ENCODE measurements at regions of chr2 and their contacts with region 1.

Region 1: GRCh38 chr2:102473020-102473419 is at the start of gene SLC9A4:
- DNase-seq: no peak
- total RNA-seq, gene SLC9A4: not detected

Region 2: DNA sequence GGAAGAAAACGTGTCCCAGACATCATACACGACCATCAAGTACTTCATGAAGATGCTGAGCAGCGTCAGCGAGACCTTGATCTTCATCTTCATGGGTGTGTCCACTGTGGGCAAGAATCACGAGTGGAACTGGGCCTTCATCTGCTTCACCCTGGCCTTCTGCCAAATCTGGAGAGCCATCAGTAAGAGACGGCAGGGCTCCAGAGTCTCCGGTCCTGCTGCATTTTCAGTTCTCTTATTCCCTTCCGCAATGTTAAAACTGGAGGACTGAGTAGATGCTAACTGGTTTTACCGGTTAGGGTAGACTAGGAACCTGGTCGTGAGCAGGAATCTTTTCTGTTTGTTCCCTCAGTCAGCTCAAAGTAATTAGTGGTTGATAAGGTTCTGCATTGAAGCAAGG is 32.3 kb after region 1 on chr2:
- intact Hi-C with region 1: no loop called
- DNase-seq: no peak

Region 3: DNA sequence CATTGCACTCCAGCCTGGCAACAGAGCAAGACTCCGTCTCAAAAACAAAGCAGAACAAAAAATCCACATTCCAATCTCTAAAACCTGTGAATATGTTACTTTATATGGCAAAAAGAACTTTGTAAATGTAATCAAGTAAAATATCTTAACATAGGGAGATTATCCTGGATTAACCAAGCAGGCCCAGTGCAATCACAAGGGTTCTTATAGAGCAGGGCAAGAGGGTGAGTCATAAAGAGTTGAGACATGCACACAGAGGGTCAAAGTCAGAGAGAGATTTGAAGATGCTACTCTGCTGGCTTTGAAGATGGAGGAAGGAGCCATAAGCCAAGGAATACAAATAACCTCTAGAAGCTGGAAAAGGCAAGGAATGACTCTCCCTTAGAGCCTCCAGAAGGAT is 85.4 kb after region 1 on chr2:
- intact Hi-C with region 1: no loop called
- DNase-seq: no peak

Region 4: DNA sequence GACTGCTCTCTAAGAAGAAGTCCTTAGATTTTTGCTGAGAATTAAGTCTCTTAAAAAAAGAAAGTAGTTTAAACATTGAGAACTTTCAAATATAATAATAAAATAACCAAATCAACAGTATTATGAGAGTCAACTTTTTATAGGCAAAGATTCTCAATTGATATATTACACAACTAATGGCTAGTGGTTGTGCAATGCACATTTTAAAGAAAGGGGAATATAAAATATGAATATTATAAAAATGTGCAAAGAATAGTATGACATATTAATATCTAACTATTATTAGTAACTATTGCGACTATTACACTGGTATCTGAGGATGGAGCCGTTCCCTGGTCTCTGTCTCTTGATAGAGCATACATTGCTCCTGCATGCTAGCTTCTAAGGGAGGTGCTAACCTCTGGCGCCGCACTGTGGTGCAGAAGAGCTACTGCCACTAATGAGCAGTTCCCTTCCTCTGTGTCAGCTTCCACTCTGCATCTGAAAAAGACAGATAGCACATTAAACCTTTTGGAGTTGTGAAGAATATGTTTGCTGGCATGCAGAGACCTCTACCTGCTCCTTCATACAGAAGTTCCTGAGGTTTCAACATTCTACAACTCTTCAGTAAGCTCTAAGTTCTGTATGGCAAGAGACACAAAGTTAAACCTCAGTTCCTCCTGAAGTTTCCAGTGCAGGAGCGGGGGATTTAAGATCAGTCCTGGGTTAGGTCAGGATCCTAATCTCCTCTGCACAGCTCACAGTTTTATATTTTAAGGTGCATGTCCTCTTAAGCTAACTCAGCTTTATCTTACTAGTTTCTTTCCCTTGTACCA is 142.8 kb after region 1 on chr2:
- intact Hi-C with region 1: loop called (anchors 2 kb)
- DNase-seq: peak; percentile 80

Region 5: DNA sequence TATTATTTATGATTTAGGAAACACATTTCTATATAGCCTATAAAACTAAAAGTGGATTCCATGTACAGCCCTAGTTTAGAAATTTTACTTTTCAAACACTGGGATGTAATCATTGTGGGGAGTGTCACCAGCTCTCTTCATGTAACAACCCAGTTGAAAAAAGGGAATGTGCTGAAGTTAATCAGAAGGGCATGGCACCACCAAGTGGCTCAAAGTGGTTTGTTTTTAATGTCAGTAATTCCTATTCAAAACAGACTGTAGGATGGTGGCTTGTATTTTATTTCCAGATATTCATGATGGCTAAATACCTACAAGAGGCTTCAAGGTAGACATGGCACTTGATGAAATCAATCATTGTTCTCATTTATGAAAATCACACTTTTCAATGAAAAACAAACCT is 230.7 kb after region 1 on chr2:
- intact Hi-C with region 1: loop called (anchors 5 kb)
- DNase-seq: no peak

Measured in cardiac septum (tissue), 1 donor.